MCF 10A (cell line): ENCODE measurements at regions of chr3 and their contacts with region 1.

Region 1: GRCh38 chr3:99833617-99834205 is 16.0 kb downstream of the CMSS1 start:
- DNase-seq: no peak
- H3K4me3 Mint-ChIP-seq: no peak overlapping the region
- H3K27ac Mint-ChIP-seq: no peak overlapping the region
- H3K4me1 Mint-ChIP-seq: peaks cover 5% of the 10 kb centered on the region
- H3K27me3 Mint-ChIP-seq: no peaks in the 10 kb centered on the region
- CTCF ChIP-seq: no peak

Region 2: GRCh38 chr3:99250821-99251355 is 582.8 kb before region 1 on chr3:
- CTCF ChIA-PET with region 1: no interaction called
- POLR2A ChIA-PET with region 1: no interaction called
- intact Hi-C with region 1: no loop called
- DNase-seq: peak; percentile 63
- H3K4me3 Mint-ChIP-seq: no peak overlapping the region
- H3K27ac Mint-ChIP-seq: peak overlapping the region; percentile 81
- H3K4me1 Mint-ChIP-seq: peaks cover 41% of the 10 kb centered on the region
- H3K27me3 Mint-ChIP-seq: no peaks in the 10 kb centered on the region
- CTCF ChIP-seq: no peak

Region 3: GRCh38 chr3:99645277-99646106 is 188.2 kb before region 1 on chr3:
- CTCF ChIA-PET with region 1: no interaction called
- POLR2A ChIA-PET with region 1: no interaction called
- intact Hi-C with region 1: no loop called
- DNase-seq: peak; percentile 57
- H3K4me3 Mint-ChIP-seq: no peak overlapping the region
- H3K27ac Mint-ChIP-seq: peak overlapping the region; percentile 63
- H3K4me1 Mint-ChIP-seq: peaks cover 84% of the 10 kb centered on the region
- H3K27me3 Mint-ChIP-seq: no peaks in the 10 kb centered on the region
- CTCF ChIP-seq: peak; percentile 85

Region 4: GRCh38 chr3:99789011-99789721 is 44.5 kb before region 1 on chr3:
- CTCF ChIA-PET with region 1: no interaction called
- POLR2A ChIA-PET with region 1: no interaction called
- intact Hi-C with region 1: no loop called
- DNase-seq: peak; percentile 66
- H3K4me3 Mint-ChIP-seq: no peak overlapping the region
- H3K27ac Mint-ChIP-seq: no peak overlapping the region
- H3K4me1 Mint-ChIP-seq: peaks cover 6% of the 10 kb centered on the region
- H3K27me3 Mint-ChIP-seq: no peaks in the 10 kb centered on the region
- CTCF ChIP-seq: peak; percentile 63

Region 5: GRCh38 chr3:100047455-100048141 is 213.9 kb after region 1 on chr3:
- CTCF ChIA-PET with region 1: interaction called, 13 read pairs
- POLR2A ChIA-PET with region 1: no interaction called
- intact Hi-C with region 1: no loop called
- DNase-seq: peak; percentile 74
- H3K4me3 Mint-ChIP-seq: peak overlapping the region; percentile 22
- H3K27ac Mint-ChIP-seq: peak overlapping the region; percentile 85
- H3K4me1 Mint-ChIP-seq: peaks cover 44% of the 10 kb centered on the region
- H3K27me3 Mint-ChIP-seq: no peaks in the 10 kb centered on the region
- CTCF ChIP-seq: no peak

Region 6: GRCh38 chr3:100254168-100254777 is 420.6 kb after region 1 on chr3:
- CTCF ChIA-PET with region 1: interaction called, 139 read pairs
- POLR2A ChIA-PET with region 1: interaction called, 4 read pairs
- intact Hi-C with region 1: loop called (anchors 1 kb)
- DNase-seq: peak; percentile 68
- H3K4me3 Mint-ChIP-seq: no peak overlapping the region
- H3K27ac Mint-ChIP-seq: no peak overlapping the region
- H3K4me1 Mint-ChIP-seq: no peaks in the 10 kb centered on the region
- H3K27me3 Mint-ChIP-seq: no peaks in the 10 kb centered on the region
- CTCF ChIP-seq: peak; percentile 78

Region 7: GRCh38 chr3:100316641-100317069 is 482.9 kb after region 1 on chr3:
- CTCF ChIA-PET with region 1: interaction called, 25 read pairs
- POLR2A ChIA-PET with region 1: interaction called, 3 read pairs
- intact Hi-C with region 1: no loop called
- DNase-seq: peak; percentile 74
- H3K4me3 Mint-ChIP-seq: no peak overlapping the region
- H3K27ac Mint-ChIP-seq: no peak overlapping the region
- H3K4me1 Mint-ChIP-seq: no peaks in the 10 kb centered on the region
- H3K27me3 Mint-ChIP-seq: no peaks in the 10 kb centered on the region
- CTCF ChIP-seq: peak; percentile 72